Tibial artery (tissue), 4 donors: ENCODE measurements at regions of chr19 and their contacts with region 1.

Region 1: GRCh38 chr19:56080669-56081401 is 40.3 kb downstream of the ZNF787 start:
- DNase-seq: peak; percentile 68 to 80
- H3K4me3 ChIP-seq: peak overlapping the region; percentile 28 to 37
- H3K27ac ChIP-seq: no peak overlapping the region
- H3K4me1 ChIP-seq: peaks cover 0 to 11% (median 8%) of the 10 kb centered on the region in 4 donors
- H3K27me3 ChIP-seq: peaks cover 0 to 6% of the 10 kb centered on the region in 2 donors
- CTCF ChIP-seq: peak; percentile 32 to 47

Region 2: GRCh38 chr19:55923556-55923955 is 157.3 kb before region 1 on chr19:
- intact Hi-C with region 1: no loop called
- DNase-seq: no peak
- H3K4me3 ChIP-seq: no peak overlapping the region
- H3K27ac ChIP-seq: no peak overlapping the region
- H3K4me1 ChIP-seq: no peaks in the 10 kb centered on the region
- H3K27me3 ChIP-seq: no peaks in the 10 kb centered on the region
- CTCF ChIP-seq: no peak

Region 3: GRCh38 chr19:55956389-55956788 is 124.4 kb before region 1 on chr19:
- intact Hi-C with region 1: no loop called
- DNase-seq: no peak
- H3K4me3 ChIP-seq: no peak overlapping the region
- H3K27ac ChIP-seq: no peak overlapping the region
- H3K4me1 ChIP-seq: no peaks in the 10 kb centered on the region
- H3K27me3 ChIP-seq: no peaks in the 10 kb centered on the region
- CTCF ChIP-seq: no peak

Region 4: DNA sequence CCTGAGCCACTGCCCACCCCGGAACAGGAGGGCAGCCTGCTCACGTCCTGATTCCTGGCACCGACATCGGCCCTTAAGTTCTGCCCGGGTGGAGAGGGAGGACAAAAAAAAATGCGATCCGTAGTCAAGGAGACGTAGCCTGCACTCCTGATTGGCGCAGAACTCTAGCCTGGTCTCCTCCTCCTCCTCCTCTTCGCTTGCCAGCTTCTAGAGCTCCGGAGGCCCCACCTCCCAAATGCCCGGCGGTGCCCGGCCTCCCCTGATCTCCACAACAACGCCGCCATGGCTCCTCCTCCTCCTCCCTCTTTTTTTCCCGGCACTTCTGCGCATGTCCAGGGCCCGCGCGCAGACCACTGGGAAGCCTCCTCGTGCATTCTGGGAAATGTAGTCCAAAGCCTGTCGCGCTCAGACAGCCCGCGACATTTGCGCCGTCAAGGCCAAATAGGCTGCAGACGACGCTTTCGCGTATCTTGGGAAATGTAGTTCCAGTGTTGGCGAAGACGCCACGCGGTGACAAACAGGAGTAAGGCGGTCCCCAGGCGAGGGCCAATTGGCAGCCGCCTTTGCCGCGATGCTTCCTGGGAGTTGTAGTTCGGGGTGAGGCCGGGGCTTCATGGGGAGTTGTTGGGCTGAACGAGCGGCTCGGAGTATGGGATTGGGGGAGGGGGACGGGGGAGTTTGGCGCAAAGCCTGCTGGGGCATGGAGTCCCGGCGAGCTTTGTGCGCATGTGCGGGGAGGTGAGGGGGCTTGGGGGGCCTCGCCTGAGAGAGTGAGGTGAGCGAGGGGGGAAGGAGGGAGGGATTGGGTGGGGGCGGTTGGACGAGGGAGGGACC is 60.0 kb after region 1 on chr19 and contains the start of gene ZNF444:
- intact Hi-C with region 1: no loop called
- DNase-seq: peak; percentile 99 to 100
- H3K4me3 ChIP-seq: peak within 1 kb of the TSS; percentile 60 to 70
- H3K27ac ChIP-seq: peak within 1 kb of the TSS; percentile 89 to 95
- H3K4me1 ChIP-seq: peaks cover 0 to 34% (median 18%) of the 10 kb centered on the region in 4 donors
- H3K27me3 ChIP-seq: no peaks in the 10 kb centered on the region
- CTCF ChIP-seq: no peak

Region 5: DNA sequence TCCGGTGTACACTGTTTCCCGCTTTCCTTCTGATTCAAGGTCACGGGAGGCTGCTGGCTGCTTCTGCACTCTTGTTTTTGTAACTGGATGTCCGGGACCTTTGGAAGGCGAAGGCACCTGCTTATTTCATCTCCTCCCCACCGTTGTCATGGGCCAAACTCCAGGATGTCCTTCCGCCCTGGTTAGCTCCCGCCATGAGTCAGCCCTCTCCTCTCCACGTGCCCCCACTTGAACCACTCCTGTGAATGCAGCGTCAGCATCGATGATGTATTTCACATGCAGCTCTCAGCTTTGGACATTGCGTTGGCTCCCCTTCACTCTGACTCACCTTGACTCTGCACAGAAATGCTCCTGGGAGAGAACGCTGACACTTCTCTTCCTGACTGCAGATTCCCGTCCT is 89.4 kb after region 1 on chr19:
- intact Hi-C with region 1: loop called (anchors 5 kb)
- DNase-seq: no peak
- H3K4me3 ChIP-seq: no peak overlapping the region
- H3K27ac ChIP-seq: no peak overlapping the region
- H3K4me1 ChIP-seq: no peaks in the 10 kb centered on the region
- H3K27me3 ChIP-seq: peaks cover 0 to 17% of the 10 kb centered on the region in 2 donors
- CTCF ChIP-seq: no peak

Region 6: DNA sequence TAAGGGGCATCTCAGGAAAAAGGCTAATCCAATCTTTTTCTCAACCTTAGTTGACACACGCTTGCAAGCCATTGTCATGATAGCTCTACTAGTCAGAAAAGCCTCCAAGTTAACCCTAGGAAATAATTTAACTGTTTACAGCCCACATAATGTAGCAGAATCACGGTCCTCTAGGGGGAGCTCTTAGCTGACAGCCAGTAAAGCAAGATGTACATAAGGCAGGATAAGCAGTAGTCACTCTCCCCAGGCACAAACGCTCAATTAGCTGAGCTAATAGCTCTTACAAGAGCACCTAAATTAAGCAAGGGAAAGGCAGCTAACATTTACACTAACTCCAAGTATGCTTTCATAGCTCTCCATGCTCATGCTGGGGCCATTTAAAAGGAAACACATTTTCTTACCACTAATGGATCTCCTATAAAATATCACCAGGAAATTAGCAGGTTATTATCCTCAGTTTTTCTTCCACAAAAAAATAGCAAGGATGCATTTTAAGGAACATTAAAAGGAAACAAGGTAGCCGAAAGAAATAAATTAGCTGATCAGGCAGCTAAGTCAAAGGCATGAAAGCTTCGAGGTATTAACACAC is 267.5 kb after region 1 on chr19:
- intact Hi-C with region 1: loop called (anchors 10 kb)
- DNase-seq: no peak
- H3K4me3 ChIP-seq: no peak overlapping the region
- H3K27ac ChIP-seq: no peak overlapping the region
- H3K4me1 ChIP-seq: no peaks in the 10 kb centered on the region
- H3K27me3 ChIP-seq: no peaks in the 10 kb centered on the region
- CTCF ChIP-seq: no peak

Region 7: GRCh38 chr19:56423276-56423984 is 342.6 kb after region 1 on chr19:
- intact Hi-C with region 1: no loop called
- DNase-seq: no peak
- H3K4me3 ChIP-seq: no peak overlapping the region
- H3K27ac ChIP-seq: no peak overlapping the region
- H3K4me1 ChIP-seq: no peaks in the 10 kb centered on the region
- H3K27me3 ChIP-seq: no peaks in the 10 kb centered on the region
- CTCF ChIP-seq: no peak